ENCODE measurements at regions of chr20 and their contacts with region 1.

Region 1: GRCh38 chr20:9609887-9610502 is 95.6 kb downstream of the LAMP5 start:
- DNase-seq: peak; percentile 59
- ATAC-seq: peak; percentile 68; the same call in 1 of the 2 replicates
- H3K4me3 ChIP-seq: no peak overlapping the region
- H3K27ac ChIP-seq: no peak overlapping the region
- H3K4me1 ChIP-seq: no peaks in the 10 kb centered on the region
- H3K27me3 ChIP-seq: 0 out of 2 replicates have a peak, but pooled peaks cover 2% of the 10 kb centered on the region
- CTCF ChIP-seq: peak; percentile 59 to 77 (median 64); a peak in 5 of 6 replicates
- POLR2A ChIP-seq: no peak
- RAD21 ChIP-seq: peak; percentile 69

Region 2: DNA sequence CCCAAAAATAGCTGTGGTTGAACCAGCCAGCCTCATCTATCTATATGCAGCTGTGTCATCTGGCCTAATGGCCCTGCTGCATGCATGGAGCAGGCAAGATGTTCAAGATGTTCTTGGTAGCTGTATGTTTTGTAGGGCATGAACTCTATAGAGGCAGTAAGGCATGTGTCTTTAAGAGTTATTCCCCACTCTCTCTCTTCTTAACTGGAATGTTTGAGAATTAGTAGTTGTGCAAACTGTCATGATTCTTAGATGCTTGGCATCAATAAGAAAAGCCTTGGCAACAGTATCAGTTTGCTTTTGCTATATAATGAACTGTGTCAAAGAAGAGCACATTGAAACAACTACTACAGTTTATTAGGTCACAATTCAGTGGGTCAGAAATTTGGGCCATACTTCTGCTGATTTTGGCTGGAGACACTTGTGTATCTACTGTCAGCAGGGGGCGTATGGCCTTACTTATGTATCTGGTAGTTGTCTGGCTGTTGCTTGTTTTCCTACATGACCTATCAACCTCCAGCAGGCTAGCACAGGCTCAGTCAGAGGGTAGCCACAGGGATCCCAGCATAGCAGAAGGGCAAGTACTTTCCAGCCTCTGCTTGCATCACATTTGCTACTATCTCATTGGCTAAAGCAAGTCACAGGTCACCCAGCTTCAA is 151.7 kb before region 1 on chr20:
- CTCF ChIA-PET with region 1: interaction called, 26 read pairs
- POLR2A ChIA-PET with region 1: no interaction called
- RAD21 ChIA-PET with region 1: interaction called in 1 of 2 experiments, 6 read pairs
- intact Hi-C with region 1: loop called (anchors 5 kb)
- DNase-seq: peak; percentile 10
- ATAC-seq: peak; percentile 65
- H3K4me3 ChIP-seq: no peak overlapping the region
- H3K27ac ChIP-seq: no peak overlapping the region
- H3K4me1 ChIP-seq: no peaks in the 10 kb centered on the region
- H3K27me3 ChIP-seq: no peaks in the 10 kb centered on the region
- CTCF ChIP-seq: peak; percentile 5 to 55 (median 53); a peak in 4 of 6 replicates
- POLR2A ChIP-seq: no peak
- RAD21 ChIP-seq: no peak; the same call in 1 of the 2 replicates

Region 3: DNA sequence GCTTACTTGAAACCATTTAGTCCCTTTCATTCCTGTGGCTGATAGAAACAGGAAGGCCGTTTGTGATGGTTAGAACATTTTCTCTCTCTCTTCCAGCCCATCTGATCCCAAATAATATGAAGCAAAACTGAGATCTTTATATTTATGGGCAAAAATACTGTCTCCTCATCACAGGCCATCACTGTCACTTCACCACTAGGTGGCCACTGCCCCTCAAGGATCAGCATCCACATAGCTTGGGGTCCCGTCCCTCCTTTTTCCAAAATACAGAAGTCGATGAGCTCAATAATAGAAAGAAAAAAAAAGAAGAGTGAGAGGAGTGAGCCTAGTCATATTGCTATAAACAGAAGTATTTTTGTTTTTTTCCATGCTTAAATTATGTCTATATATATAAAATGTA is 142.0 kb before region 1 on chr20:
- CTCF ChIA-PET with region 1: interaction called, 8 read pairs
- POLR2A ChIA-PET with region 1: no interaction called
- RAD21 ChIA-PET with region 1: no interaction called
- intact Hi-C with region 1: loop called (anchors 5 kb)
- DNase-seq: no peak
- ATAC-seq: peak; percentile 70
- H3K4me3 ChIP-seq: no peak overlapping the region
- H3K27ac ChIP-seq: no peak overlapping the region
- H3K4me1 ChIP-seq: no peaks in the 10 kb centered on the region
- H3K27me3 ChIP-seq: no peaks in the 10 kb centered on the region
- CTCF ChIP-seq: peak; percentile 20 to 79 (median 77); a peak in 5 of 6 replicates
- POLR2A ChIP-seq: no peak
- RAD21 ChIP-seq: peak; percentile 43

Measured in HCT116 (cell line).